Activated CD8-positive, alpha-beta T cell treated with anti-CD3 and anti-CD28 coated beads, Interleukin-2, amount 10 ng/mL, durations not matched to agents 7 days and 5 days (primary cell): ENCODE measurements at regions of chr6 and their contacts with region 1.

Region 1: DNA sequence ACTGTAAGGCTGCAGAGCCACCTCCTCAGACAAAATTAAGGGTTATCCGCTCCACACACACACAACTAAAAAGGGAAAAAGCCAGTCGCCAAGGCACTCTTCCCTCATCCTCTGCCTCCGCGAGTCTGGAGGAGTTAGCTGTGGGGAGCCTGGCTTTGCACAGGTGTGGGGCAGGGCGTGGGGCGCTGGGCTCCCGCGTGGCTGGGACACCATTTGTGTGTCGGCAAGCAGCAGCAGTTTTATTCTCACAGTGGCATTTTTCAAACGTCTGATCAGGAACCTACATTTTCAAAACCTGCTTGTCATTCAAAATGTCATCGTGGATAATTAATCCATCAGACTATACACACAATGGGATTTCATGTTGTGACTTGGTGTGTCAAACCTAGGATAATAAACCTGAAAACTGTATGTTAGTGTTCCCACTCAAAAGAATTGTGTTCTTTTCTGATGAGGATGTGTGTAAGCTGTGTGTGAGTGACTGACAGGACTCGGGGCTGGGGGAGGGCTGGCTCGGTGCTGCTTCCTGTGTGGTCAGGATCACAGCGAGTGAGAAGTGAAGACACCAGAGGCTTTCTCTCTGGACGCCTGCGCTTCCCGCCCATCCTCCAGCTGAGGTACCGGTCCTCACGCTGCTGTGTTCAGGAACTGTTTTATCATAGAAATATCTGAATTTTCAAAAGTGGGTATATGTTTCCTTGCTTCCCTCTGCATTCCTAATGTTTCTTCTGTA is 83.1 kb downstream of the IRF4 start:
- DNase-seq: peak; percentile 93
- ATAC-seq: peak; percentile 100
- H3K4me3 Mint-ChIP-seq: peak overlapping the region; percentile 62
- H3K27ac Mint-ChIP-seq: peak overlapping the region; percentile 96
- H3K4me1 Mint-ChIP-seq: peaks cover 64% of the 10 kb centered on the region
- H3K27me3 Mint-ChIP-seq: no peaks in the 10 kb centered on the region

Region 2: DNA sequence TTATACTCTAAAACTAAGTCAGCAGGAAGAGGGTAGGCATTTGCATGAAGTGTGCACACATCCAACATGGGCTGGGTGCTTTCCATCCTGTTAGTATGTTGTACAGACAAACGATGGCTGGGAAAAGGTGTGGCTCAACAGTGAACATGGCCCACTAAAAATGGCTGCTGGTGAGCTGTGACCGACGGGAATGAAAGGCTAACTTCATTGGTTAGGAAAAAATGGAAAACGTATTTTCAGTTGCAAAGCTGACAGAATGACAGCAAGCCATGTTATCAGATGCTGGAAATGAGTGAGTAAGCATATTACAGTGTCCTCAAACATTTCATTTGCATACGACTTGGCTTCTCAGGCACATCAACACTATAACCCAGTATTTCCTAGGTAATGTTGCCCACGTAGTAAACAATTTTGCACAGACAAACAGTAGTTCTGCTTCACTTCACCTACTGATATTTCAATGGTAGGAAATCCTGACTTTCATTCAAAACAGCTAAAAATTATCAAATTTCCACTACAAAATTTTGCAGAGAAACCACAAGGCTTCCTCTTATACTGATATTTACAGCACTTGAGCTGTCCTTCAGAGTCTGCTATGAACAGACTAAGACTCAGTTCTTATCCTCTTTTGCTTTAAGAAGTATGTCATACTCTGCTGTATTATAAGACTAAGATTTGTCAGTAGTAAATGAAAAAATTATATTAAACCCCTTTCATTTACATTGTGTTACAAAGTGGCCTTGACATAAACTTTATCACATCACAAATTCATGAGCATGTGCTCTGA is 15.8 kb after region 1 on chr6:
- CTCF ChIA-PET with region 1: interaction called, 28 read pairs
- POLR2A ChIA-PET with region 1: interaction called, 14 read pairs
- DNase-seq: peak; percentile 38
- ATAC-seq: peak; percentile 58
- H3K4me3 Mint-ChIP-seq: peak overlapping the region; percentile 64
- H3K27ac Mint-ChIP-seq: peak overlapping the region; percentile 93
- H3K4me1 Mint-ChIP-seq: peaks cover 76% of the 10 kb centered on the region
- H3K27me3 Mint-ChIP-seq: no peaks in the 10 kb centered on the region